Activated T-helper 1 cell treated with anti-CD3 and anti-CD28 coated beads, Interleukin-12 subunit alpha, Interleukin-12 subunit beta, Interleukin-2, Interleukin-4 antibody, amounts not matched to agents 30 ng/mL and 10 ng/mL and 1 ng/mL, durations not matched to agents 14 hours and 24 hours and 36 hours (primary cell): ENCODE measurements at regions of chr17 and their contacts with region 1.

Region 1: DNA sequence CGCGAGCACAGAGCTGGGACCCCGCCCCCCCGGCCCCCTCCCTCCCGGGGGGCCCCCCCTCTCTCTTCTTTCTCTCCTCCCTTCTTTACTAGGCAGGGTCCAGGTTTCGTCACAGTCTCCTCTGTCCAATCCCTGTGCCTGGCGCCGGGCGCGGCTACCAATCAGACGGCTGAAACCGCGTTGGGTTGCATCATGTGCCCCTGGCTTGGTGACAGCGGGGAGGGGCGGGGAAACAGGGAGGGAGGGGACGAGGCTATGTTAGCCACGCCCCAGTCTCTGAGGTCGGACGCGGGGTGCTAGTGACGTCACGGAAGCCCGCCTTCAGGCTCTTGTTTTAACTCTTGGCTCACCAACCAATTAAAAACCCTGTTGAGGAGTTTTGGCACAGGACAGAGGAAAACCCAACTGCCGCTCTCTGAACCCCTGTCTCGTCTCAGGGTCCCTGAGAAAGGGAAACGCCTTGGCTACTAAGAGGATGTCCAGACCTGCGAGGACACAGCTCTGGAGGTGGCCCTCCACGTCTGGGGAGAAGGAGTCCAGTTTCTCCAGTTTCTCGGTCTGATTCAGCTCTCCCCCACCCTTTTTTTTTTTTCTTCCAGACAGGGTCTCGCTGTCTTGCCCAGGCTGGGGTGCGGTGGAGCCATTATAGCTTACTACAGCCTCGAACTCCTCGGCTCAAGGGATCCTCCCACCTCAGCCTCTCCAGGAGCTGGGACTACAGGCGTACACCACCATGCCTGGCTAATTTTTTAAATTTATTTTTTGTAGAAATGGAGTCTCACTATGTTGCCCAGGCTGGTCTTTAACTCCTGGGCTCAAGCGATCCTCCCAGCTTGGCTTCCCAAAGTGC is 439 bp upstream of the PLEKHH3 start:
- DNase-seq: peak; percentile 97
- H3K4me3 Mint-ChIP-seq: peak overlapping the region; percentile 87
- H3K27ac Mint-ChIP-seq: peak overlapping the region; percentile 83
- H3K4me1 Mint-ChIP-seq: peaks cover 50% of the 10 kb centered on the region
- H3K27me3 Mint-ChIP-seq: peaks cover 36% of the 10 kb centered on the region

Region 2: DNA sequence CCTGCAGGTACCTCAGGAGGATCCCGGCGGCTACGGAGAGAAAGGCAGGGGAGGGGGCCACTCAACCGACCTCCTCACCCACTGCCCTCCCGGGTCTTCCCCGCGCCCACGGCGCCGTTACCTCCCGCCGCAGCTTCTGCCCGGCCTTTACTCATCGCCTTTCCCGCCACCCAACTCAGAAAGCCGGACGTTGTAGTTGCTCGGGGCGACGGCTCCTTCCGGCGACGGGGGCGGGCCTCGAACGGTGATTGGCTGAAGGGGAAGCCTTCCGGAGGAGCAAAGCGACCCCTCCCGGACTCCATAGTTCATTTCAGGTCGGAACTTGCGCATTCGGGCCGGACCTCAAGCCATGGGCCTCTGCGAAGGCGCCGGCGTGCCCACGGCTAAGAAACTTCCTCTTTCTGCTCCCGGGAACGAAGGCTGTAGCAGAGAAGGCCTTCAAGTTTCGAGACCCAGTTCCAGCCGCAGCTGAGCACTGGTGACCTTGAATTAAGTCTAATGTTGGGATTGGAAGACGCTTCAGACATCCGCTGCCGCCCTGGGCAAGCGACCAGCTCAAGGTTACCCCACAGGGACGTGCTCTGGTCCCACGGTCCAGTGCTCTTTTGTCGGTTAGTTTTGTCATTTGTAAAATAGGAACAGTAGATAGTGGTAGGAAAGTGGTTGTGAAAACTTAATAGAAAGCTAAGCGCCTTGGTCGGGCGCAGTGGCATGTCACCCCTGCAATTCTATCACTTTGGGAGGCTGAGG is 99.5 kb before region 1 on chr17 and contains the start of gene PSMC3IP:
- intact Hi-C with region 1: loop called (anchors 1 kb)
- DNase-seq: peak; percentile 92
- H3K4me3 Mint-ChIP-seq: peak within 1 kb of the TSS; percentile 98
- H3K27ac Mint-ChIP-seq: peak within 1 kb of the TSS; percentile 96
- H3K4me1 Mint-ChIP-seq: peaks cover 47% of the 10 kb centered on the region
- H3K27me3 Mint-ChIP-seq: no peaks in the 10 kb centered on the region
- total RNA-seq, gene PSMC3IP: 27.6 and 31.5 TPM in 2 replicates

Region 3: DNA sequence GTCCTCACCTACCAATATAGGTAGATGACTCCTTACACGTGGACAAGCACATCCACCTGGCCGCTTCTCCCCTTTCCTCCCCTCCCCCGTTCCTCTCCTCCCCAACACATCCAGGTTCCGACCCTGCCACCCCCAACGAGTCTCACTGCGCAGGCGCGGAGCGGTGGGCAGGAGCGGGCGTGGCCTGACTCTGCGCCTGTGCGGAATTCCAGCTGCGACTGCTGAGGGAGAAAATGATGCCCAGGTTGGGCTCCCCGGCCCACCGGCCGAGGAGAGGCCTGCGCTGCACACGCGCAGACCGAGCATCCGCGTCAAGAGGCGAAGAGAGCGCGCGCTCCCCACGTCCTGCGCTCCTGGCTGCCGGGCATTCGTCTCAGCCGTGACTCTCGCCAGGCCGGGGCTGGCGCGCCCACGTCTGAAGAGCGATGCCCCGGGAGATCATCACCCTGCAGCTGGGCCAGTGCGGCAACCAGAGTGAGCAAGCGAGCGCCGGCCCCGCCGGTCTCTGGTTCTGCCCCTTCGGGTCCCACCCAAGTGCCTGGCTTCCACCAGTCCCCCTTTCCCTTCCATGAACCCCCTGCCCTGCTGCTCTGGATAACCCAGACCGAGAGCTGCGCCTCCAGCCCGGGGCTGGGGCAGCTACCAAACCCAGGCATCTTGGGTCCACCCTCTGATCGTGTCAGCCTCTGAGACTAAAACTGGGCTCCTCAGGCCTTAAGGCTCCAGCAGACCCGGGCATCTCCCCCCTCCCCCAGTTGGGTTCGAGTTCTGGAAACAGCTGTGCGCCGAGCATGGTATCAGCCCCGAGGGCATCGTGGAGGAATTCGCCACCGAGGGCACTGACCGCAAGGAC is 17.9 kb before region 1 on chr17 and contains the start of gene TUBG2:
- intact Hi-C with region 1: loop called (anchors 2 kb)
- DNase-seq: peak; percentile 70
- H3K4me3 Mint-ChIP-seq: peak within 1 kb of the TSS; percentile 86
- H3K27ac Mint-ChIP-seq: peak within 1 kb of the TSS; percentile 55
- H3K4me1 Mint-ChIP-seq: peaks cover 26% of the 10 kb centered on the region
- H3K27me3 Mint-ChIP-seq: peaks cover 8% of the 10 kb centered on the region
- total RNA-seq, gene TUBG2: 9.1 and 11.6 TPM in 2 replicates

Region 4: GRCh38 chr17:42744806-42745617 is 67.8 kb after region 1 on chr17 and contains the start of gene EZH1:
- intact Hi-C with region 1: loop called (anchors 1 kb)
- DNase-seq: peak; percentile 93
- H3K4me3 Mint-ChIP-seq: peak within 1 kb of the TSS; percentile 91
- H3K27ac Mint-ChIP-seq: peak within 1 kb of the TSS; percentile 83
- H3K4me1 Mint-ChIP-seq: peaks cover 15% of the 10 kb centered on the region
- H3K27me3 Mint-ChIP-seq: peaks cover 25% of the 10 kb centered on the region
- total RNA-seq, gene EZH1: 35.6 and 40.0 TPM in 2 replicates

Region 5: DNA sequence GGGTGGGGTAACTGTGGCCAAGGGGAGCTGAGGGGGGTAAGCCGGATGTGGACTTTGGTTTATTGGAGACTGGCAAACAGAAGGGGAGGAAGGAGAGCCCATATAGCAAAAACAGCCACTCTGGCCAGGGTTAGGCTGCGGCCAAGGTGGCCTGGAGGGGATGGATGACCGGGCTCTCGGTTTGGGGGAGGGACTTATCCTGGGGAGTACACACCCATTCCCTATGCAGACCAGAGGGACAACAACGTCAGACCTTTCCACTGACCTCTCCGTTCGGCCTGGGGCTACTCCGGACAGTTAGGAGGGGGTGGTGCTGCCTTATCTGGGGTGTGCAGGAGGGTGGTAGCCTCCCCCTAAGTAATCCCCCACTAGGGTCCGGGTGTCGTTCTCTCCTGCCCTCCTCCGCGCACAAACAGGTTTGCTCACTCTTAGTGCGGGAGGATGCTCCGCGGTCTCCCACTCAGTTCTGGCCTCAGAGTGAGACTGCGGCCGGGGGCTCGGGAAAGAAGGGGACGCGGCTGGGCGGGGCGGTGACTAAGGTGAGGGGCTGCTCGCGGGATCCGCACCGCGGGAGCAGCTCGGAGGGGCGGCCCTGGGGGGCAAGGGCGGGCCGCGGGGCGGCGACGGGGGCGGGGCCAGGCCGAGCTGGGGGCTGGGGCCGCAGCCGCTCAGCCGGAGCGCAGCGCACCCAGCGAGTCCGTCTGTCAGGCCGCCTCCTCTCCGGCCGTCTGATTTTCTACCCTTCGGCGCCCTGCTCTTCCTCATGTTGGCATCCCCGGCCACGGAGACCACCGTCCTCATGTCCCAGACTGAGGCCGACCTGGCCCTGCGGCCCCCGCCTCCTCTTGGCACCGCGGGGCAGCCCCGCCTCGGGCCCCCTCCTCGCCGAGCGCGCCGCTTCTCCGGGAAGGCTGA is 103.0 kb after region 1 on chr17 and contains the start of gene WNK4:
- intact Hi-C with region 1: loop called (anchors 5 kb)
- DNase-seq: no peak
- H3K4me3 Mint-ChIP-seq: no peak within 1 kb of the TSS
- H3K27ac Mint-ChIP-seq: no peak within 1 kb of the TSS
- H3K4me1 Mint-ChIP-seq: peaks cover 12% of the 10 kb centered on the region
- H3K27me3 Mint-ChIP-seq: peaks cover 43% of the 10 kb centered on the region
- total RNA-seq, gene WNK4: 0.12 and 0.29 TPM in 2 replicates

Region 6: GRCh38 chr17:43024407-43025289 is 347.4 kb after region 1 on chr17 and contains the start of gene RND2:
- intact Hi-C with region 1: loop called (anchors 5 kb)
- DNase-seq: peak; percentile 73
- H3K4me3 Mint-ChIP-seq: peak within 1 kb of the TSS; percentile 90
- H3K27ac Mint-ChIP-seq: peak within 1 kb of the TSS; percentile 84
- H3K4me1 Mint-ChIP-seq: peaks cover 16% of the 10 kb centered on the region
- H3K27me3 Mint-ChIP-seq: peaks cover 25% of the 10 kb centered on the region
- total RNA-seq, gene RND2: 0.07 TPM in 1 of 2 replicates, not detected in the other